ENCODE measurements at regions of chr1 and their contacts with region 1.

Region 1: GRCh38 chr1:203486618-203487370 is 7.2 kb upstream of the OPTC start:
- DNase-seq: no peak
- ATAC-seq: no peak
- H3K4me3 Mint-ChIP-seq: peak overlapping the region; percentile 56
- H3K27ac Mint-ChIP-seq: no peak overlapping the region
- H3K4me1 Mint-ChIP-seq: peaks cover 7% of the 10 kb centered on the region
- H3K27me3 Mint-ChIP-seq: no peaks in the 10 kb centered on the region

Region 2: GRCh38 chr1:203038891-203039608 is 447.7 kb before region 1 on chr1:
- CTCF ChIA-PET with region 1: no interaction called
- POLR2A ChIA-PET with region 1: no interaction called
- intact Hi-C with region 1: no loop called
- DNase-seq: peak; percentile 77
- ATAC-seq: peak; percentile 85
- H3K4me3 Mint-ChIP-seq: no peak overlapping the region
- H3K27ac Mint-ChIP-seq: no peak overlapping the region
- H3K4me1 Mint-ChIP-seq: peaks cover 4% of the 10 kb centered on the region
- H3K27me3 Mint-ChIP-seq: peaks cover 4% of the 10 kb centered on the region

Region 3: DNA sequence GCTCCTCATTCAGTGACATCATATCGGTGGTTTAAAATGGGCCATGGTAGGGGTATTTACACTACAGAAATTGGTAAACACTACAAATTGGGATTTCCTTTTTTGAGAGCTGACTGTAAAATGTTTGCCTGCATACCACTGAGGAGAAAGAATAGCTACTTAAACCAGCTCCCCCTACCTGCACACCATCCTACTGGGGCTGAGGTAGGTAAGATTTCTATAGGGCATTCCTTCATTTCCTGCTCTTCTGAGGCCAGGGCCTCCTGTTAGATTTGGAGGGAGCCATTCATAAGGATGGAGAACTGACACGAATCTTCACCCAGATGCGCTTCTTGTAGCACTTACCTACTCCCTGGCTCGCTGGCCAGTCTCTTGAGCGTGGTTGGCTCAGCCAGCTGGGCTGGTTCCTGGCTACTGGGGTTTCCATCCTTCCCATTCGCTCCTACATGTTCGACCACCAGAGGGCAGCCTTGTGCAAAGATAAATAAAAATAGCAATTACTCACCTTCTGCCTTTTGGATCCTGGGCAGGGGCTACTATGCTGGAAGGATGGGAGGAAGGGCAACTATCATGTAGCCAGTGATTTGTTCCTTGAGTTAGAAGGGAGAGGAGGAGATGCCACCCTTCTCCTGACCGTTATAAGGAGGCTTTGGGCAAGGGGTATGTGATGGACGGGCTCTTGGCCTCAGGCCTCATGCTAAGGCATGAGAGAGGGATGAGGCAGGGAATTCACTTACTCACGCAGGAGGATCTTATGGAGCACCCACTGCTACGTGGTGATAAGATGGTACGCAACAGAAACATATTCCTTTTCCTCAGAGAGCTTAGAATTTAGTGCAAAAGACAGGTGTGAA is 17.8 kb after region 1 on chr1:
- CTCF ChIA-PET with region 1: interaction called, 12 read pairs
- POLR2A ChIA-PET with region 1: no interaction called
- intact Hi-C with region 1: no loop called
- DNase-seq: peak; percentile 83
- ATAC-seq: peak; percentile 75
- H3K4me3 Mint-ChIP-seq: no peak overlapping the region
- H3K27ac Mint-ChIP-seq: no peak overlapping the region
- H3K4me1 Mint-ChIP-seq: peaks cover 4% of the 10 kb centered on the region
- H3K27me3 Mint-ChIP-seq: peaks cover 2% of the 10 kb centered on the region

Region 4: GRCh38 chr1:203880606-203881005 is 393.8 kb after region 1 on chr1:
- CTCF ChIA-PET with region 1: no interaction called
- POLR2A ChIA-PET with region 1: no interaction called
- intact Hi-C with region 1: no loop called
- DNase-seq: no peak
- ATAC-seq: no peak
- H3K4me3 Mint-ChIP-seq: no peak overlapping the region
- H3K27ac Mint-ChIP-seq: no peak overlapping the region
- H3K4me1 Mint-ChIP-seq: no peaks in the 10 kb centered on the region
- H3K27me3 Mint-ChIP-seq: no peaks in the 10 kb centered on the region